SK-N-SH (cell line): ENCODE measurements at regions of chr12 and their contacts with region 1.

Region 1: GRCh38 chr12:1117970-1118563 is 127.0 kb downstream of the ERC1 start:
- DNase-seq: peak; percentile 45
- H3K4me3 ChIP-seq: no peak overlapping the region; a peak in 1 of 4 replicates
- H3K27ac ChIP-seq: no peak overlapping the region
- H3K4me1 ChIP-seq: peaks cover 0 to 14% of the 10 kb centered on the region in 2 experiments; a peak in 2 of 4 replicates
- H3K27me3 ChIP-seq: no peaks in the 10 kb centered on the region
- CTCF ChIP-seq: peak; percentile 99
- EP300 ChIP-seq: no peak
- RAD21 ChIP-seq: peak; percentile 97

Region 2: GRCh38 chr12:1130164-1130563 is 12.1 kb after region 1 on chr12:
- CTCF ChIA-PET with region 1: interaction called, 35 read pairs
- POLR2A ChIA-PET with region 1: no interaction called
- DNase-seq: no peak
- H3K4me3 ChIP-seq: no peak overlapping the region
- H3K27ac ChIP-seq: no peak overlapping the region
- H3K4me1 ChIP-seq: peaks cover 6 to 10% of the 10 kb centered on the region in 2 experiments; a peak in 2 of 4 replicates
- H3K27me3 ChIP-seq: no peaks in the 10 kb centered on the region
- CTCF ChIP-seq: no peak
- EP300 ChIP-seq: no peak
- RAD21 ChIP-seq: no peak

Region 3: GRCh38 chr12:1250641-1251040 is 132.6 kb after region 1 on chr12:
- CTCF ChIA-PET with region 1: interaction called, 11 read pairs
- POLR2A ChIA-PET with region 1: no interaction called
- DNase-seq: peak; percentile 8
- H3K4me3 ChIP-seq: no peak overlapping the region
- H3K27ac ChIP-seq: peak overlapping the region in 1 of 2 experiments; percentile 39; a peak in 2 of 4 replicates
- H3K4me1 ChIP-seq: peaks cover 12 to 30% of the 10 kb centered on the region in 2 experiments
- H3K27me3 ChIP-seq: no peaks in the 10 kb centered on the region
- CTCF ChIP-seq: no peak
- EP300 ChIP-seq: no peak
- RAD21 ChIP-seq: no peak

Region 4: DNA sequence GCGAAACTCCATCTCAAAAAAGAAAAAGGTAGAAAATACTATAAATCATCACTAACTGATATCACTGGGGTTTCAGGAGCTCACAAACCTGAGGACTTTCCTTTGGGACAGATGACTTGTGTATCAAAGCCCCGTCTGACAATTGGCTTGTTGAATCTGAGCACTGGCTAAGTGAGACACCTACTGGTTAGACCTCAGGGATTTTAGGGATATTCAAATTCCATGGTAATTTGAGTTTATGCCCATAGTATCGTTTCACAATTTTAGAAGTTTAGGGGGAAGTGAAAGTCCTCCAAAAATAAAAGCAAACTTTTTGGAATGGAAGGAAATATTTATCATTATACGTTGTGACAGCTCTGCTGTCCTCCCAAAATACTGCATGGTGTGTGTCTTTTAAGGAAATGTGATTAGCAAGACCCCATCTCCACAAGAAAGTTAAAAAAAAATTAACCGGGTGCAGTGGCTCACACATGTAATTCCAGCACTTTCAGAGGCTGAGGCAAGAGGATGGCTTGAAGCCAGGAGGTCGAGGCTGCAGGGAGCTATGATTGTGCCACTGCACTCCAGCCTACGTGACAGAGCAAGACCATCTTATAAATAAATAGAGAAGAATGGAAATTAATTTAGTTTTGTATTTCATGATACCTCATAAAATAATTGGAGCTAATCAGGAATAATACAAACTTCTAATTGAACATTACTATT is 427.1 kb after region 1 on chr12:
- CTCF ChIA-PET with region 1: interaction called, 33 read pairs
- POLR2A ChIA-PET with region 1: no interaction called
- DNase-seq: no peak
- H3K4me3 ChIP-seq: no peak overlapping the region
- H3K27ac ChIP-seq: no peak overlapping the region
- H3K4me1 ChIP-seq: no peaks in the 10 kb centered on the region
- H3K27me3 ChIP-seq: no peaks in the 10 kb centered on the region
- CTCF ChIP-seq: peak; percentile 43
- EP300 ChIP-seq: no peak
- RAD21 ChIP-seq: peak; percentile 61

Region 5: GRCh38 chr12:1575408-1576401 is 457.6 kb after region 1 on chr12:
- CTCF ChIA-PET with region 1: interaction called, 268 read pairs
- POLR2A ChIA-PET with region 1: no interaction called
- DNase-seq: peak; percentile 60
- H3K4me3 ChIP-seq: peak overlapping the region in 1 of 2 experiments; percentile 38; a peak in 1 of 4 replicates
- H3K27ac ChIP-seq: peak overlapping the region in 1 of 2 experiments; percentile 66; a peak in 3 of 4 replicates
- H3K4me1 ChIP-seq: peaks cover 21 to 30% of the 10 kb centered on the region in 2 experiments; a peak in 3 of 4 replicates
- H3K27me3 ChIP-seq: no peaks in the 10 kb centered on the region
- CTCF ChIP-seq: no peak
- EP300 ChIP-seq: peak in 1 of 2 experiments; percentile 37; a peak in 1 of 4 replicates
- RAD21 ChIP-seq: no peak

Region 6: GRCh38 chr12:1594261-1595025 is 476.4 kb after region 1 on chr12 and contains the start of gene FBXL14:
- CTCF ChIA-PET with region 1: interaction called, 16 read pairs
- POLR2A ChIA-PET with region 1: no interaction called
- DNase-seq: peak; percentile 92
- H3K4me3 ChIP-seq: peak within 1 kb of the TSS; percentile 76 to 80
- H3K27ac ChIP-seq: peak within 1 kb of the TSS; percentile 65 to 95
- H3K4me1 ChIP-seq: peaks cover 30 to 33% of the 10 kb centered on the region in 2 experiments
- H3K27me3 ChIP-seq: no peaks in the 10 kb centered on the region
- CTCF ChIP-seq: no peak
- EP300 ChIP-seq: no peak
- RAD21 ChIP-seq: no peak
- polyA plus RNA-seq, gene FBXL14: 11.3 and 12.8 TPM in 2 replicates